Naive thymus-derived CD4-positive, alpha-beta T cell (primary cell): ENCODE measurements at regions of chr11 and their contacts with region 1.

Region 1: DNA sequence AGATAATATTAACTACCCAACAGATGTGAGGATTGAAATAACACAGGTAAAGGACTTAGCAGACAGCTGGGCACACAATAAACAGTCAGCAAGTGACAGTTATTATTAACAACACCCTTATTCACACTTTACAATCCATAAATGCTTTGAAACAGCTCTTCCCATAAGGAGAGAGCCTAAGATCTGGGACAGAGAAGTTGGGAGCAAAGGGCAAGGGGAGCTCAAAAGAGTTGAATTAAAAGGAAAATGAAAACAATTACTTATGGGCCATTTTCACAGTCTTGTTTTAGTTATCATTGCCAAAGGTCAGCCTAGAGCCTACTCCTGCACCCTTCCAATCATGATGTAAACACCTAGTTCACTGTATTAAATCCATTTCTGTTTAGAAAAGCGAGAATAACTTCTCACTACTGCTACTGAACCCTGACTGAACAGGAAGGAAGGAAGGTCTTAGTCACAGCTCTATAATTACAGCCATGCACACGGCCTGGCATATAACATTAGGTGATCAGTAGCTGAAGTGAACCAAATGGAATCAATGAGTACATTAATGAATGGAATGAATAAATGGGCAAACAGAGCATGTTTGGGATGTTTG is 111.3 kb downstream of the PLEKHA7 start:
- DNase-seq: no peak
- ATAC-seq: no peak
- H3K4me3 ChIP-seq: no peak overlapping the region
- H3K4me3 Mint-ChIP-seq: peak overlapping the region in 1 of 10 donors; percentile 62
- H3K27ac ChIP-seq: no peak overlapping the region
- H3K27ac Mint-ChIP-seq: peak overlapping the region in 2 of 9 donors; percentile 62 to 85
- H3K4me1 ChIP-seq: no peaks in the 10 kb centered on the region
- H3K4me1 Mint-ChIP-seq: peaks cover 0 to 33% (median 5%) of the 10 kb centered on the region in 7 donors
- H3K27me3 ChIP-seq: no peaks in the 10 kb centered on the region
- H3K27me3 Mint-ChIP-seq: no peaks in the 10 kb centered on the region

Region 2: DNA sequence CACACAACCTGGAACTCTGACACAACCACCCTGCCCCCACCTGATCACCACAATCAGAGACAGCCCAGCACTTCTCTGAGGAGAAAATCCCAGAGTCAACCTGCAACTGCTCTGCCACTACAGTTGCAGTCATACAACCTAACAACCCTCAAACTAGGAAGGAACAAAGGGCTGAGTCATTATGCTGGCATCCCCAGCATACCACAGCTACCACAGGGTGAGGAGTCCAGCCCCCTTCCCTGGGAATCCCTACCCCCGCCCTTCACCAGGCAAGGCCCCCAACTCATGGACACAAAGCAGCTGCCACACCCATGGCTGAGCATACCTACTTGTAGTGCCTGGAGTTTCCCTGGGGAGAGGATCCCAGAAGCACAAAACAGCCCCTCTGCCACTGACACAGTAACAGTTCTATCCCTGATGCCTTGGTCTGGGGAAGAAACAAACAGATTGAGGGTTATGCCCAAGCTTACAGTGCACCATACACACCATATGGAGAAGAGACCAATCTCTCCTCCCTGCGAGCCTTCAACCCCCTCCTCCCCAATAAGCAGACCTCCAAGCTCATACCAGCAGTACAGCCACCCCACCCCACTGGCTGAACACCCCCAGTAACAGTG is 233.0 kb before region 1 on chr11:
- CTCF ChIA-PET with region 1: no interaction called
- POLR2A ChIA-PET with region 1: no interaction called
- intact Hi-C with region 1: no loop called
- DNase-seq: no peak
- ATAC-seq: no peak
- H3K4me3 ChIP-seq: no peak overlapping the region
- H3K4me3 Mint-ChIP-seq: no peak overlapping the region
- H3K27ac ChIP-seq: no peak overlapping the region
- H3K27ac Mint-ChIP-seq: no peak overlapping the region
- H3K4me1 ChIP-seq: no peaks in the 10 kb centered on the region
- H3K4me1 Mint-ChIP-seq: no peaks in the 10 kb centered on the region
- H3K27me3 ChIP-seq: no peaks in the 10 kb centered on the region
- H3K27me3 Mint-ChIP-seq: peaks cover 0 to 22% (median 17%) of the 10 kb centered on the region in 5 donors

Region 3: DNA sequence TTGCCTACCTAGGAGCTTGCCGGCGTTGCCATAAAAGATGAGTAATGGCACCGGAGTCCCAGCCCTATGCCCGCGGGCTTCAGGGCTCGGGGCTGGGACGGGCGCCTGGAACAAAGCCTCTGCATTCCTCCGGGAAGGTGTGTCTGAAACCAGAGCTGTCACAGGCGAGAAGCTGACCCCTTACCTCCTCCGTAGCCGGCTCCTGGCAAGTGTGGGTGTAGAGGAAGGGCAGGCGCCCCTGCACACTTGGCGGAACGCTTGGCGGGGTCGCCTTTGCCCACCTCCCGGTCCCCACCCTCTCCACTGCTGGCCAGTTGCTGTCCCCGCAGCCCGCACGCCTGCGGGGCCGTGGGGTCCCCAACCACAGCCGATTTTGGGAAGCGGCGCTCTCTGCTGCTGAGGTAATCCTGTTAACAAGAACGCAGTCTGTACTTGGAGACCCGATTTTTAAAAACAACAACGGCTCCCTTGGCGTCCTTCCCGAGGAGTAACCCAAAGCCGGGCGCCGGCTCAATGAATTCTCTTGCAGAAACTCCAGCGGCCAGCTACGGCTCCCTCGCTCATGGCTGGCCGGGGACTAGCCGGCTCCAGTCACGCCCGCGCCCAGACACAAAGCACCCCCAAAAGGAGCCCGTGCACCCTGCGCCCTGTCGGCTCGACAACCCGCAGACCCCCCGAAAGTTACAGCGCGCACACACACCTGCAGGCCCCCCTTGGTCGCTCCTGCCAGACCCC is 22.1 kb after region 1 on chr11:
- CTCF ChIA-PET with region 1: no interaction called
- POLR2A ChIA-PET with region 1: no interaction called
- intact Hi-C with region 1: loop called in 1 of 2 experiments (anchors 2 kb)
- DNase-seq: no peak
- ATAC-seq: peak; percentile 10
- H3K4me3 ChIP-seq: no peak overlapping the region
- H3K4me3 Mint-ChIP-seq: peak overlapping the region in 2 of 10 donors; percentile 33 to 70
- H3K27ac ChIP-seq: no peak overlapping the region
- H3K27ac Mint-ChIP-seq: no peak overlapping the region
- H3K4me1 ChIP-seq: no peaks in the 10 kb centered on the region
- H3K4me1 Mint-ChIP-seq: peaks cover 2 to 13% (median 5%) of the 10 kb centered on the region in 7 donors
- H3K27me3 ChIP-seq: no peaks in the 10 kb centered on the region
- H3K27me3 Mint-ChIP-seq: peaks cover 40 to 58% (median 48%) of the 10 kb centered on the region in 5 donors

Region 4: GRCh38 chr11:17102462-17102861 is 199.6 kb after region 1 on chr11:
- CTCF ChIA-PET with region 1: no interaction called
- POLR2A ChIA-PET with region 1: no interaction called
- intact Hi-C with region 1: no loop called
- DNase-seq: no peak
- ATAC-seq: no peak
- H3K4me3 ChIP-seq: no peak overlapping the region
- H3K4me3 Mint-ChIP-seq: no peak overlapping the region
- H3K27ac ChIP-seq: no peak overlapping the region
- H3K27ac Mint-ChIP-seq: no peak overlapping the region
- H3K4me1 ChIP-seq: no peaks in the 10 kb centered on the region
- H3K4me1 Mint-ChIP-seq: no peaks in the 10 kb centered on the region
- H3K27me3 ChIP-seq: no peaks in the 10 kb centered on the region
- H3K27me3 Mint-ChIP-seq: no peaks in the 10 kb centered on the region